Ovary (tissue), 10 donors: ENCODE measurements at regions of chr18 and their contacts with region 1.

Region 1: GRCh38 chr18:49935215-49935614 is 121.9 kb upstream of the ACAA2 start:
- DNase-seq: no peak
- H3K4me3 ChIP-seq: no peak overlapping the region
- H3K27ac ChIP-seq: no peak overlapping the region
- H3K4me1 ChIP-seq: no peaks in the 10 kb centered on the region
- H3K27me3 ChIP-seq: no peaks in the 10 kb centered on the region
- CTCF ChIP-seq: no peak
- EP300 ChIP-seq: no peak
- POLR2A ChIP-seq: no peak

Region 2: DNA sequence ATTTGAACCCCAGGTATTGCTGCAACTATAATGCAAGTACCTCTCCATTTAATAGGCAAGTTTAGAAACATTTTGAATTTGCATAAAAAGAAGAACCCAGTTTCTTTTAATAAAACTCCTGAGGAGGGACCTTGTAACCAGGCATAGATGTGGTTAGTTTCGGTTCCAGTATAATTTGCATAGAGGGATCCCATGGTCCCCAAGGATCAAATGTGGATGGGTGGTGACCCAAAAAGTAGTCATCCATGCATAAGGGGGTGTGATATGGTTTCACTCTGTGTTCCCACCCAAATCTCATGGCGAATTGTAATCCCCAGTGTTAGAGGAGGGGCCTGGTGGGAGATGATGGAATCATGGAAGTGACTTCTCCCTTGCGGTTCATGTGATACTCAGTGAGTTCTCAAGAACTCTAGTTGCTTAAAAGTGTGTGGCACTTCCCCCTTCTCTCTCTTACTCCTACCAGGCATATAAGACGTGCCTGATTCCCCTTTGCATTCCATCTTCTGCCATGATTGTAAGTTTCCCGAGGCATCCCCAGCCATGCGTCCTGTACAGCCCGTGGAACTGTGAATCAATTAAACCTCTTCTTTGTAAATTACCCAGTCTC is 399.4 kb after region 1 on chr18:
- intact Hi-C with region 1: no loop called
- DNase-seq: no peak
- H3K4me3 ChIP-seq: no peak overlapping the region
- H3K27ac ChIP-seq: no peak overlapping the region
- H3K4me1 ChIP-seq: no peaks in the 10 kb centered on the region
- H3K27me3 ChIP-seq: no peaks in the 10 kb centered on the region
- CTCF ChIP-seq: no peak
- EP300 ChIP-seq: no peak
- POLR2A ChIP-seq: no peak

Region 3: GRCh38 chr18:51545446-51545845 is 1610.2 kb after region 1 on chr18:
- intact Hi-C with region 1: loop called in 1 of 4 experiments (anchors 5 kb)
- DNase-seq: no peak
- H3K4me3 ChIP-seq: no peak overlapping the region
- H3K27ac ChIP-seq: no peak overlapping the region
- H3K4me1 ChIP-seq: no peaks in the 10 kb centered on the region
- H3K27me3 ChIP-seq: no peaks in the 10 kb centered on the region
- CTCF ChIP-seq: no peak
- EP300 ChIP-seq: no peak
- POLR2A ChIP-seq: no peak